ENCODE measurements at regions of chr21 and their contacts with region 1.

Region 1: GRCh38 chr21:45130324-45130774 is 56.0 kb downstream of the ADARB1 start:
- DNase-seq: peak; percentile 86
- ATAC-seq: peak; percentile 58
- H3K4me3 ChIP-seq: peak overlapping the region; percentile 63
- H3K27ac ChIP-seq: peak overlapping the region; percentile 69
- H3K4me1 ChIP-seq: peaks cover 29% of the 10 kb centered on the region
- H3K27me3 ChIP-seq: no peaks in the 10 kb centered on the region
- CTCF ChIP-seq: no peak

Region 2: DNA sequence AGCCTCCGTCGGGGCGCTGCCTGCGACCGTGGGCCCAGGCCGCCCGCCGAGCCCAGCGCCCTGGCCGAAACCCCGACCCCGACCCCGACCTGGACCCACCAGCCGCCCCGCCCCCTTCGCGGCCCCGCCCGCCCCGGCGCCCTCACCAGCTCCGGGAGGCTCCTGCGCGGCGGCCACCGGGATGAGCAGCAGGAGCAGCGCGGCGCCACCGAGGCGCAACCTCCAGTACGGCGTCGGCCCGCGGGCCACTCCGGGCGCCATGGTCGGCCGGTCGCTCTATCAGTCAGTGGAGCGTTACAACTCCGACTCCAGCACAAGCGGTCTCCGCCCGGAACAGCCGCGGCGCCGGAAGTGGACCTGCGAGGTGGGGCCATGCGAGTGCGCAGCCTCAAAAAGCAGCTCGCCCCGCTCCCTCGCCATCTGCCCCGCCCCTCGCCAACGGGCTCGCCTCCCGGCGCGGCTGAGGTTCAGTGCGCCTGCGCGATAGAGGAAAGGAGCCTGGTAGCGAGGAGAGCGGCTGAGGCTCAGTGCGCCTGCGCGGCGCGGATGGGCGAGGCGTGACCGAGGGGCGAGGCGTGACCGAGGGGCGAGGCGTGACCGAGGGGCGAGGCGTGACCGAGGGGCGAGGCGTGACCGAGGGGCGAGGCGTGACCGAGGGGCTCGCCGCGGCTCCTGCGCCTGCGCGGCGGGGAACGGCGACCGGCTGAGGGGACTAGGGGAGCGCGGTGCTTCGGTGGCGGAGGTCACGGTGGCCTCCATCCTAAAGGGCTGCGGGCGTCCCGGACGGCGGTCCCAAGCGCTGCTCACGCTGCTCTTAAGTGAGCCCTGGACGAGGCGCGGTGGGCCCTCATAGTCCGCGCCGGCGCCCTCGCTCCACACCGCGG is 256.8 kb before region 1 on chr21 and contains the start of gene PTTG1IP:
- CTCF ChIA-PET with region 1: no interaction called
- POLR2A ChIA-PET with region 1: interaction called, 3 read pairs
- intact Hi-C with region 1: loop called (anchors 10 kb)
- DNase-seq: peak; percentile 99
- ATAC-seq: peak; percentile 48
- H3K4me3 ChIP-seq: peak within 1 kb of the TSS; percentile 80
- H3K27ac ChIP-seq: peak within 1 kb of the TSS; percentile 82
- H3K4me1 ChIP-seq: peaks cover 59% of the 10 kb centered on the region
- H3K27me3 ChIP-seq: no peaks in the 10 kb centered on the region
- CTCF ChIP-seq: no peak
- total RNA-seq, gene PTTG1IP: 330 and 455 TPM in 2 replicates

Region 3: GRCh38 chr21:44949779-44950198 is 180.6 kb before region 1 on chr21:
- CTCF ChIA-PET with region 1: interaction called, 24 read pairs
- POLR2A ChIA-PET with region 1: no interaction called
- intact Hi-C with region 1: loop called (anchors 2 kb)
- DNase-seq: peak; percentile 81
- ATAC-seq: peak; percentile 84
- H3K4me3 ChIP-seq: no peak overlapping the region
- H3K27ac ChIP-seq: no peak overlapping the region
- H3K4me1 ChIP-seq: peaks cover 13% of the 10 kb centered on the region; the same call in 1 of the 2 replicates
- H3K27me3 ChIP-seq: no peaks in the 10 kb centered on the region
- CTCF ChIP-seq: peak; percentile 96

Region 4: GRCh38 chr21:45074048-45074817 is 56.1 kb before region 1 on chr21 and contains the start of gene ADARB1:
- CTCF ChIA-PET with region 1: interaction called, 3 read pairs
- POLR2A ChIA-PET with region 1: no interaction called
- intact Hi-C with region 1: loop called (anchors 1 kb)
- DNase-seq: peak; percentile 62
- ATAC-seq: peak; percentile 46
- H3K4me3 ChIP-seq: peak within 1 kb of the TSS; percentile 88
- H3K27ac ChIP-seq: peak within 1 kb of the TSS; percentile 41
- H3K4me1 ChIP-seq: peaks cover 21% of the 10 kb centered on the region; the same call in 1 of the 2 replicates
- H3K27me3 ChIP-seq: no peaks in the 10 kb centered on the region
- CTCF ChIP-seq: no peak
- total RNA-seq, gene ADARB1: 14.1 and 21.0 TPM in 2 replicates

Region 5: DNA sequence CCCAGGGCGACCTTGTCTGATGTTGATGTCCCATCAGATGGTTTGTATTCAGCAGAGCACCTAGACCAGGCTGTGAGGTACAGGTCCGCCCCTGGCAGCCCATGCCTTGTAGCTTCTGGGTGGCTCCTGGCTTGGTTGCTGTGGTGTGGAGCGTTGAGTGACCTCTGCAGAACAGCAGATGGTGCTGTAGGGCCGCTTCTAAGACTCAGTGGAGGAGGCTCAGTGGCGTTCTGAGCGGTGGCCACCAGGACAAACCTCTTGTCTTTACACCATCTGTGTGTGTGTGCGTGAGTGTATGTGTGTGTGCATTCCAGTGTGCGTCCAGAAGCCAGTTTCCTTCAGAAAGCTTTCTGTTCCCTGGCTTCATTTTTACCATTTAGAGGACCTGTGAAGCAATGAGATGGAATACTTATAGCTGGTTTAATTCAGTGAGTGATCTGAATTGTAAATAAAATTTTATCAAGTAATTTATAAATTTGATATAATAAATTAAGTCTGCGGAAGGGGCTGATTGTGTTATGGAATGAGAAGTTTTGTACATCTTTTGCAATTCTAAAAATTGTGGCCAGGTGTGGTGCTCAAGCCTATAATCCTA is 10.1 kb after region 1 on chr21:
- CTCF ChIA-PET with region 1: interaction called, 24 read pairs
- POLR2A ChIA-PET with region 1: no interaction called
- intact Hi-C with region 1: no loop called
- DNase-seq: peak; percentile 91
- ATAC-seq: peak; percentile 92
- H3K4me3 ChIP-seq: no peak overlapping the region
- H3K27ac ChIP-seq: no peak overlapping the region
- H3K4me1 ChIP-seq: peaks cover 16% of the 10 kb centered on the region
- H3K27me3 ChIP-seq: no peaks in the 10 kb centered on the region
- CTCF ChIP-seq: peak; percentile 96